CD4-positive, alpha-beta T cell (primary cell): ENCODE measurements at regions of chr19 and their contacts with region 1.

Region 1: GRCh38 chr19:3762501-3763459 is at the start of gene MRPL54:
- DNase-seq: peak; percentile 98 to 100 (median 99)
- ATAC-seq: peak; percentile 81
- H3K4me3 ChIP-seq: peak within 1 kb of the TSS; percentile 99
- H3K4me3 Mint-ChIP-seq: peak within 1 kb of the TSS; percentile 97
- H3K27ac ChIP-seq: peak within 1 kb of the TSS; percentile 99 to 100
- H3K27ac Mint-ChIP-seq: peak within 1 kb of the TSS; percentile 100
- H3K4me1 ChIP-seq: peaks cover 70% of the 10 kb centered on the region
- H3K4me1 Mint-ChIP-seq: peaks cover 33% of the 10 kb centered on the region
- H3K27me3 ChIP-seq: no peaks in the 10 kb centered on the region
- H3K27me3 Mint-ChIP-seq: no peaks in the 10 kb centered on the region
- CTCF ChIP-seq: no peak
- total RNA-seq, gene MRPL54: 68.9 to 71.1 TPM

Region 2: DNA sequence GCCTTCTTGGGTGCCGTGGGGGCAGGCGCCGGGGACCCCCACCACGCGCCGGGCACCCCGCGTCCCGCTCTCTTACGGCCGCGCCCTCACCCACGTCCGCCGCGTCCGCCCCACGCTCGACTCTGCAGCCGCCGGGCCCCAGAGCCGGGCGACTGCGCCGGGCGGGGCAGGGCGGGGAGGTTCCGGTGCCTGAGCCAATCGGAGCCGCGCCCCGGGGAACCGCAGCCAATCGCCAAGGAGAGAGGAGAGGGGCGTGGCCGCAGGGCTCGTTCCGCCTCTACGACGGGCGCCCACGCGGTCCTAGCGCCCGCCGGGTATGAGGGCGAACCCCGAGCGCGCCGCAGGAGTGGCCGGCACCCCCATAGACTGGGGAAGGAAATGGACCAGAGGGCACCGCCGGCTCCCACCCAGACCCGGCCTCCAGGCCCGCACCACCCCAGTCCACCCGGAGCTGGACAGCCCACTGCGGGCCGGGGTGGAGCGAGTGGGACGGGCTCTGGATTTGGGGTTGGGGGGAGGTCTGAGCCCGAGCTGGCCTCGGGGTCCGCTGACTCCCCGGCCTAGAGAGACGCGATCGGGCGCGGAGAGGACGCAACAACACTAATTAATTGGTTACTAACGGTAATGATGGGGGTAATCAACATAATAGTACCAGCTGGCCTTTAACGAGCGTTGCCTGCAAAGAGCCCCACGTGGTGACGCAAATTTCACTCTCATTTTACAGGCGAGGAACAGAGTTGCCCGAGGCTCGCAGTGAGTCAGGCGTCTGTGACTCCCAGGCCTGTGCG is 205.1 kb before region 1 on chr19 and contains the start of gene MFSD12:
- CTCF ChIA-PET with region 1: no interaction called
- POLR2A ChIA-PET with region 1: interaction called, 12 read pairs
- intact Hi-C with region 1: no loop called
- DNase-seq: peak; percentile 87 to 97 (median 94)
- ATAC-seq: peak; percentile 77
- H3K4me3 ChIP-seq: peak within 1 kb of the TSS; percentile 84
- H3K4me3 Mint-ChIP-seq: peak within 1 kb of the TSS; percentile 93
- H3K27ac ChIP-seq: peak within 1 kb of the TSS; percentile 45 to 71
- H3K27ac Mint-ChIP-seq: peak within 1 kb of the TSS; percentile 93
- H3K4me1 ChIP-seq: peaks cover 54% of the 10 kb centered on the region
- H3K4me1 Mint-ChIP-seq: peaks cover 33% of the 10 kb centered on the region
- H3K27me3 ChIP-seq: no peaks in the 10 kb centered on the region
- H3K27me3 Mint-ChIP-seq: no peaks in the 10 kb centered on the region
- CTCF ChIP-seq: no peak
- total RNA-seq, gene MFSD12: 62.5 to 65.0 TPM

Region 3: GRCh38 chr19:3595521-3596061 is 167.2 kb before region 1 on chr19:
- CTCF ChIA-PET with region 1: no interaction called
- POLR2A ChIA-PET with region 1: no interaction called
- intact Hi-C with region 1: no loop called
- DNase-seq: no peak
- ATAC-seq: no peak
- H3K4me3 ChIP-seq: no peak overlapping the region
- H3K4me3 Mint-ChIP-seq: no peak overlapping the region
- H3K27ac ChIP-seq: no peak overlapping the region
- H3K27ac Mint-ChIP-seq: no peak overlapping the region
- H3K4me1 ChIP-seq: no peaks in the 10 kb centered on the region
- H3K4me1 Mint-ChIP-seq: no peaks in the 10 kb centered on the region
- H3K27me3 ChIP-seq: no peaks in the 10 kb centered on the region
- H3K27me3 Mint-ChIP-seq: no peaks in the 10 kb centered on the region
- CTCF ChIP-seq: no peak

Region 4: GRCh38 chr19:3710265-3710812 is 52.4 kb before region 1 on chr19:
- CTCF ChIA-PET with region 1: no interaction called
- POLR2A ChIA-PET with region 1: no interaction called
- intact Hi-C with region 1: no loop called
- DNase-seq: peak in 2 of 14 experiments; percentile 67 to 77
- ATAC-seq: no peak
- H3K4me3 ChIP-seq: no peak overlapping the region
- H3K4me3 Mint-ChIP-seq: no peak overlapping the region
- H3K27ac ChIP-seq: no peak overlapping the region
- H3K27ac Mint-ChIP-seq: no peak overlapping the region
- H3K4me1 ChIP-seq: peaks cover 8% of the 10 kb centered on the region
- H3K4me1 Mint-ChIP-seq: peaks cover 6% of the 10 kb centered on the region
- H3K27me3 ChIP-seq: peaks cover 0 to 10% of the 10 kb centered on the region in 2 experiments
- H3K27me3 Mint-ChIP-seq: peaks cover 7% of the 10 kb centered on the region
- CTCF ChIP-seq: no peak

Region 5: DNA sequence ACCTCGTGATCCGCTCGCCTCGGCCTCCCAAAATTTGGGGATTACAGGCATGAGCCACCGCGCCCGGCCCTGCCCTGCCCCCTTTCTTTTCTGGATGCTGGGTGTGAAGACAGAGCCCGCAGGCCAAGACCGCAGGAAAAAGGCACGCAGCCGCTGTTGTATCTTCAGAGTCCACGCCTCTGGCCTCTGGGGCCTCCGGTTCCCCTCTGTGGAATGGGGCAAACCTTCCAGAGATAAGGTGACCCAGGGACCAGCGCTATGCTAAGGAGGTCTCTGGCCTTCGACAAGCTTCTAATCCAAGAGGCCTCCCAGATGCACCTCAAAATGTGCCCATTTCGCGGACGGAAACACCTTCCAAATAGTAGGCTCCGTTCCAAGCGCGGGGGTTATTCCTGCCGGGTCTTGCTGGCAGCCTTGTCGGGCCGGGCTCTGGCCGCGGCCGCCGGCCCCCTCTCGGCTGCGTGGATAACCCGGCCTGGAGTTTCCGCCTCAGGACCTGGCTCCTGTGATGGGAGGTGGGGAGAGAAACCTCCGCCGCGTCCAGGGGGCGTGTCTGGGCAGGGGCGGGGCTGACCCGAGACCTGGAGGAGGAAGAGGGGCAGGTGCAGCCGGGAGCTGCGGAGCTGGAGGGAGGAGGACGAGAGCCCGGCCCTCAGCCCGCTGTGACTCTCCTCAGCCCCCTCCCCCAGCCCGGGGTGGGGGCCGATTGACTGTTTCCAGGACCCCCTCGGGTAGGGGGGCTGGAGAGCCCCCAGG is 41.5 kb before region 1 on chr19:
- CTCF ChIA-PET with region 1: interaction called, 3 read pairs
- POLR2A ChIA-PET with region 1: interaction called, 28 read pairs
- intact Hi-C with region 1: loop called in 1 of 2 experiments (anchors 2 kb)
- DNase-seq: peak; percentile 82 to 94 (median 88)
- ATAC-seq: peak; percentile 96
- H3K4me3 ChIP-seq: peak overlapping the region; percentile 62
- H3K4me3 Mint-ChIP-seq: peak overlapping the region; percentile 82
- H3K27ac ChIP-seq: no peak overlapping the region
- H3K27ac Mint-ChIP-seq: no peak overlapping the region
- H3K4me1 ChIP-seq: peaks cover 33% of the 10 kb centered on the region
- H3K4me1 Mint-ChIP-seq: peaks cover 4% of the 10 kb centered on the region
- H3K27me3 ChIP-seq: peaks cover 14 to 15% of the 10 kb centered on the region in 2 experiments
- H3K27me3 Mint-ChIP-seq: peaks cover 8% of the 10 kb centered on the region
- CTCF ChIP-seq: no peak

Region 6: GRCh38 chr19:3798137-3798536 is 35.4 kb after region 1 on chr19:
- CTCF ChIA-PET with region 1: no interaction called
- POLR2A ChIA-PET with region 1: interaction called, 31 read pairs
- intact Hi-C with region 1: loop called in 1 of 2 experiments (anchors 5 kb)
- DNase-seq: peak in 6 of 14 experiments; percentile 16 to 82 (median 58)
- ATAC-seq: peak; percentile 71
- H3K4me3 ChIP-seq: no peak overlapping the region
- H3K4me3 Mint-ChIP-seq: no peak overlapping the region
- H3K27ac ChIP-seq: no peak overlapping the region
- H3K27ac Mint-ChIP-seq: peak overlapping the region; percentile 43
- H3K4me1 ChIP-seq: peaks cover 36% of the 10 kb centered on the region
- H3K4me1 Mint-ChIP-seq: peaks cover 21% of the 10 kb centered on the region
- H3K27me3 ChIP-seq: no peaks in the 10 kb centered on the region
- H3K27me3 Mint-ChIP-seq: no peaks in the 10 kb centered on the region
- CTCF ChIP-seq: no peak

Region 7: GRCh38 chr19:3984908-3985642 is 222.3 kb after region 1 on chr19 and contains the start of gene EEF2:
- CTCF ChIA-PET with region 1: interaction called, 10 read pairs
- POLR2A ChIA-PET with region 1: interaction called, 29 read pairs
- intact Hi-C with region 1: loop called (anchors 5 kb)
- DNase-seq: peak; percentile 89 to 97 (median 92)
- ATAC-seq: peak; percentile 58
- H3K4me3 ChIP-seq: peak within 1 kb of the TSS; percentile 88
- H3K4me3 Mint-ChIP-seq: peak within 1 kb of the TSS; percentile 97
- H3K27ac ChIP-seq: peak within 1 kb of the TSS; percentile 90 to 92
- H3K27ac Mint-ChIP-seq: peak within 1 kb of the TSS; percentile 91
- H3K4me1 ChIP-seq: peaks cover 70% of the 10 kb centered on the region
- H3K4me1 Mint-ChIP-seq: peaks cover 52% of the 10 kb centered on the region
- H3K27me3 ChIP-seq: no peaks in the 10 kb centered on the region
- H3K27me3 Mint-ChIP-seq: no peaks in the 10 kb centered on the region
- CTCF ChIP-seq: no peak
- total RNA-seq, gene EEF2: 2,756 to 2,866 TPM

Region 8: DNA sequence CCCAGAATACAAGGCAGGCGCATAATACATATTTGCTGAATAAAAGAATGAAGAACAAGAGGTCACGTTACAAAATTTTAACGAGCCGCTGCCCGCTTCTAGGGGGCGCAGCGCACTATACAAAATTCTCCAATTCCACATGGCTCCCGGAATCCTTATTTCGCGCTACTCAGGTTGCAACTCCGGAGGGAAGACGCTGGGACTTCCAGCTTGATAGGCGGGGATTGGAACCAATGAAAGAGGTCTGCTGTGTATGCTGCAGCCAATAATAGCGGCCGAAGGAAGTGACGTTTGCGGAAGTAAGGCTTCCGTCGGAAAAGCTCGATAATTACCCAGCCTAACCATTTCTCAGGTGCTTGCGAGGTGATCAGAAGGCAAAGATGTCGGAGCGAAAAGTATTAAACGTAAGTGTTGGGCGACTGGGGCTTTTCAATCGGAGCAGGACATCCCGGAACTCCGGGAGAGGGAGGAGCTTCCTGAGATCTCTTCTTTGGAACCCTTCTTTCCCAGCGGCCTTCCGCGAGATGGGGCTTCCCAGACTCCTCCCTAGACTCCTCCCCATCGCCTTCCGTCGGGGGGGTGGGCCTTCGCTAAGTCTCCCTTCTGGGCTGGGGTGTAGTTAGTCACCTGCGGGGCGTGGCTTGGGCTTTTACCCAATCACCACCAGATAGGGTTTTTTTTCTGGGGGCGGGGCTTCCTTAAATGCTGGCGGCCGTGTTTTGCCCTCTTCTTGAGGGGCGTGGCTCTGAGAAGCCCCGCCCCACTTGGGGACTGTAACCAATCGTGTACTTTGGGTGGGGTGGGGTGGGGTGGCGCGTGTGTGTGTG is 484.2 kb after region 1 on chr19 and contains the start of gene YJU2:
- CTCF ChIA-PET with region 1: interaction called, 3 read pairs
- POLR2A ChIA-PET with region 1: interaction called, 10 read pairs
- intact Hi-C with region 1: no loop called
- DNase-seq: peak; percentile 96 to 100 (median 98)
- ATAC-seq: peak; percentile 94
- H3K4me3 ChIP-seq: peak within 1 kb of the TSS; percentile 73
- H3K4me3 Mint-ChIP-seq: peak within 1 kb of the TSS; percentile 93
- H3K27ac ChIP-seq: peak within 1 kb of the TSS; percentile 94 to 99
- H3K27ac Mint-ChIP-seq: peak within 1 kb of the TSS; percentile 95
- H3K4me1 ChIP-seq: peaks cover 22% of the 10 kb centered on the region
- H3K4me1 Mint-ChIP-seq: peaks cover 17% of the 10 kb centered on the region
- H3K27me3 ChIP-seq: no peaks in the 10 kb centered on the region
- H3K27me3 Mint-ChIP-seq: peaks cover 1% of the 10 kb centered on the region
- CTCF ChIP-seq: peak; percentile 58
- total RNA-seq, gene YJU2: 32.9 to 33.7 TPM